ENCODE measurements at regions of chr2 and their contacts with region 1.

Region 1: DNA sequence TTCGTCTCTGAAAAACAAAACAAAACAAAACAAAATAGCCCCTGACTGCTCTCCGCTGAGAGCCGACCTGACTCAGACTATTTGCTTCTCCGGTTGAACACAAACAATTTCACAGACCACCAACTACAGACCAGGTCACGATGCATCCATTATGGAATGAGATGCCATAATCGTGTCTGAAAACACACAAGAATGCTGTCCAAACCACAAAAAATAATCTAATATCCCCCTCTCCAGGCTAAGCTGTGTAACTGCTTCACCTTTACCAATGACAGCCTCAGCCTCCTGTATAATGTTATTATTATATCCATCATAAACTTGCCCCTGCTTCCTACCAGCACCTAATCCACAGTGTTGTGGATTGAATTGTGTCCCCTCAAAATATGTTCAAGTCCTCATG is 114.7 kb downstream of the DNAH6 start:
- DNase-seq: peak in 4 of 5 donors; percentile 46 to 57 (median 56)
- H3K4me3 ChIP-seq: no peak overlapping the region
- H3K4me3 Mint-ChIP-seq: peak overlapping the region in 1 of 8 donors; percentile 36
- H3K27ac ChIP-seq: no peak overlapping the region
- H3K27ac Mint-ChIP-seq: peak overlapping the region in 3 of 7 donors; percentile 30 to 65 (median 59)
- H3K4me1 ChIP-seq: peaks cover 24% of the 10 kb centered on the region
- H3K4me1 Mint-ChIP-seq: peaks cover 26 to 31% (median 28%) of the 10 kb centered on the region in 4 donors
- H3K27me3 ChIP-seq: no peaks in the 10 kb centered on the region
- H3K27me3 Mint-ChIP-seq: no peaks in the 10 kb centered on the region

Region 2: DNA sequence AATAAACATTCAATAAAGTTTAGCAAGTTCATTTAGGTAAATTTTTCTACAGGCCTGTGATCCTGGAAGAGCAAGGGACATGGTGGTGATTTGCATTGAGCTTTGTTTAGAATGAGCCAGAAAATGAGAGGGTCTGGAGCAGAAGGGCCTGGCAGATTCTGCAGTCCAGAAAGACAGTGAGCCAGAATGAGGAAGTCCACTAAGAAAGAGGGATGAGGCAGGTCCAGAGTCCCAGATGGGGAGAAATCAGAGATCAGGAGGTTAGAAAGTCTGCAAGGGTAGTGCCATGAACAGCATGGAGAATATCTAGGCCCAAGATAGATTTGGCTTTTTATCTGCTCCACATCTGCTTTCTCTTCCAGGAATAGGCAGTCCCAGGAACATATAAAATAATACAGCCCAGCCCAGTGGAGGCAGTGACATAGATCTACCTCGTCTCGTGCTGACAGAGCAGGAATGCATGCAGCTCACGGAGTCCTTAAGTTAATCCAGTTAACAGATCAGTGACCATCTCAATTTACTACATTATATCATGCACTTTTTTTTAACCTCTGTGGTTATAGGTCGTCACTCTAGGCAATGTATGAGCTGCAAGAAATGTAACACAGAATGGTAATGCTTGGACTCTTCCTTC is 601.0 kb before region 1 on chr2:
- CTCF ChIA-PET with region 1: no interaction called
- POLR2A ChIA-PET with region 1: no interaction called
- intact Hi-C with region 1: loop called (anchors 5 kb)
- DNase-seq: no peak
- H3K4me3 ChIP-seq: no peak overlapping the region
- H3K4me3 Mint-ChIP-seq: no peak overlapping the region
- H3K27ac ChIP-seq: no peak overlapping the region
- H3K27ac Mint-ChIP-seq: no peak overlapping the region
- H3K4me1 ChIP-seq: peaks cover 4% of the 10 kb centered on the region
- H3K4me1 Mint-ChIP-seq: peaks cover 5 to 9% (median 9%) of the 10 kb centered on the region in 4 donors
- H3K27me3 ChIP-seq: no peaks in the 10 kb centered on the region
- H3K27me3 Mint-ChIP-seq: no peaks in the 10 kb centered on the region

Region 3: GRCh38 chr2:84495539-84496146 is 135.4 kb before region 1 on chr2:
- CTCF ChIA-PET with region 1: interaction called, 13 read pairs
- POLR2A ChIA-PET with region 1: no interaction called
- intact Hi-C with region 1: loop called (anchors 1 kb)
- DNase-seq: peak; percentile 63 to 75 (median 71)
- H3K4me3 ChIP-seq: no peak overlapping the region
- H3K4me3 Mint-ChIP-seq: no peak overlapping the region
- H3K27ac ChIP-seq: no peak overlapping the region
- H3K27ac Mint-ChIP-seq: peak overlapping the region in 6 of 7 donors; percentile 39 to 84 (median 60)
- H3K4me1 ChIP-seq: peaks cover 8% of the 10 kb centered on the region
- H3K4me1 Mint-ChIP-seq: peaks cover 6 to 14% (median 7%) of the 10 kb centered on the region in 4 donors
- H3K27me3 ChIP-seq: no peaks in the 10 kb centered on the region
- H3K27me3 Mint-ChIP-seq: no peaks in the 10 kb centered on the region

Region 4: DNA sequence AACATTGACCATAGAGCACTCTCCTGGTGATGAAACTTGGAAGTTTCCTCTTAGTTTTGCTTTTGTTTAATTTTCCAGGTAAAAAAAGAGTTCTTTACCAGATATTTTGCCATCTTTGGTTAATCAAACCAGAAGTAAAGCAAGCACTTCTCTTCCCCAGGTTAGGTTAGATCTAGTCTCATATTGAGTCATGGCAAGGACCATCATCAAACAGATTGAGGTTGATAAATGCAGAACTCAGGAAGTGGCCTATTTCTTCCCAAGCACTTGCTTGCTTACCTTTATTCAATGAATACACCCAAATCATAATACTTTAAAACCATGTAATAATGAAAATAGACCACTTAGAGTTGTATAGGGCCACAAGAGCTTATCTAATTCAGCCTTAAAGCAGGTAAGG is 91.3 kb before region 1 on chr2:
- CTCF ChIA-PET with region 1: no interaction called
- POLR2A ChIA-PET with region 1: no interaction called
- intact Hi-C with region 1: no loop called
- DNase-seq: peak in 3 of 5 donors; percentile 21 to 32 (median 28)
- H3K4me3 ChIP-seq: no peak overlapping the region
- H3K4me3 Mint-ChIP-seq: peak overlapping the region in 6 of 8 donors; percentile 0 to 58 (median 27)
- H3K27ac ChIP-seq: no peak overlapping the region
- H3K27ac Mint-ChIP-seq: peak overlapping the region in 6 of 7 donors; percentile 4 to 80 (median 56)
- H3K4me1 ChIP-seq: peaks cover 17% of the 10 kb centered on the region
- H3K4me1 Mint-ChIP-seq: peaks cover 13 to 23% (median 15%) of the 10 kb centered on the region in 4 donors
- H3K27me3 ChIP-seq: no peaks in the 10 kb centered on the region
- H3K27me3 Mint-ChIP-seq: no peaks in the 10 kb centered on the region

Region 5: DNA sequence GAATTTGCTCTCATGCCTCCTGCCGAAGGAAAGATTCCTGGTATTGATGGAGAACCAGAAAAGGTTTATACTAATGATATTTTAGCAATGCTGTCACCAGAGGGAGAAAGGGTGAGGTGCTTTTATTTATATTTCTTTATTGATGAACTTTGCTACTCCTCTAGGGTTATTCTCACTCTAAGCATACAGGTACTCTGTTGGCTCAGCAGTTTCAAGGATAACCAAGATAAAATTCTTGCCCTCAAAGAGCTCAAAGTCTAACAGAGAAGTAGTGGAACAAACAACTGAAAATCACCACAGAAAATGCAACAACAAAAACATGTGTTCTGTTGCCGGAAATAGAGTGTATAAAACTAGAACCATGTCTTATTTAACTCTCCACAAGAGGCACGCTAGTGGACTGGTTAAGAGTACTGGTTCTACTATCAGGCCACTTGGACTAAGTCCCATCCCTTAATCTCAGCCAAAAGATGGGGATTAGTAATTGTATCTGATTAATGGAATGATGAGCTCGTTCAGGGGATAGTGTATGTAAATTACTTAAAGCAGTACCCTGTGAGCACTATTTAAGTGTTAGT is 11.2 kb before region 1 on chr2:
- CTCF ChIA-PET with region 1: no interaction called
- POLR2A ChIA-PET with region 1: no interaction called
- intact Hi-C with region 1: no loop called
- DNase-seq: no peak
- H3K4me3 ChIP-seq: no peak overlapping the region
- H3K4me3 Mint-ChIP-seq: no peak overlapping the region
- H3K27ac ChIP-seq: no peak overlapping the region
- H3K27ac Mint-ChIP-seq: no peak overlapping the region
- H3K4me1 ChIP-seq: no peaks in the 10 kb centered on the region
- H3K4me1 Mint-ChIP-seq: no peaks in the 10 kb centered on the region
- H3K27me3 ChIP-seq: no peaks in the 10 kb centered on the region
- H3K27me3 Mint-ChIP-seq: no peaks in the 10 kb centered on the region

Region 6: DNA sequence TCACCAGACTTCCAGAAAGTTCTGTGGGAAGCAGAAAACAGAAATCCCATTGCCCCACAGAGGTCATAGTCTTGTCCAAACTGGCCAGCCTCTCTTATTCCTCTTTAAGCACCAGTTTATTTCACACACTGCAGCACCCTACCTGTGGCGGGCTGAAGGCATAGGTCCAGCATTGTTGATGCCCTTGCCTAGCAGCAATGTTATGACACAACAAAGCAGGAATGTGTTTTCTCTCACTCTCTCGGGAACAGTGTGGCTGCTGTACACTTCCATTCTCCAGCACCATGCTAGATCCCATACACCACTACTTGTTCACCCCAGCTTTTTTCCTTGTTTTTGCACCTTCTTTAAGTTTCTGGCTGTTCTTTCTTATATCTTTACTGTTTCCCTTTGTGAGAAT is 66.8 kb after region 1 on chr2:
- CTCF ChIA-PET with region 1: no interaction called
- POLR2A ChIA-PET with region 1: no interaction called
- intact Hi-C with region 1: no loop called
- DNase-seq: no peak
- H3K4me3 ChIP-seq: no peak overlapping the region
- H3K4me3 Mint-ChIP-seq: no peak overlapping the region
- H3K27ac ChIP-seq: no peak overlapping the region
- H3K27ac Mint-ChIP-seq: peak overlapping the region in 1 of 7 donors; percentile 73
- H3K4me1 ChIP-seq: peaks cover 27% of the 10 kb centered on the region
- H3K4me1 Mint-ChIP-seq: peaks cover 20 to 28% (median 26%) of the 10 kb centered on the region in 4 donors
- H3K27me3 ChIP-seq: no peaks in the 10 kb centered on the region
- H3K27me3 Mint-ChIP-seq: no peaks in the 10 kb centered on the region

Measured in CD4-positive, alpha-beta memory T cell (primary cell).